ENCODE measurements at regions of chr4 and their contacts with region 1.

Region 1: GRCh38 chr4:119559044-119559647 is 69.5 kb downstream of the PDE5A start:
- DNase-seq: peak; percentile 23 to 62 (median 52)
- H3K4me3 ChIP-seq: no peak overlapping the region
- H3K27ac ChIP-seq: no peak overlapping the region
- H3K4me1 ChIP-seq: no peaks in the 10 kb centered on the region
- H3K27me3 ChIP-seq: no peaks in the 10 kb centered on the region

Region 2: DNA sequence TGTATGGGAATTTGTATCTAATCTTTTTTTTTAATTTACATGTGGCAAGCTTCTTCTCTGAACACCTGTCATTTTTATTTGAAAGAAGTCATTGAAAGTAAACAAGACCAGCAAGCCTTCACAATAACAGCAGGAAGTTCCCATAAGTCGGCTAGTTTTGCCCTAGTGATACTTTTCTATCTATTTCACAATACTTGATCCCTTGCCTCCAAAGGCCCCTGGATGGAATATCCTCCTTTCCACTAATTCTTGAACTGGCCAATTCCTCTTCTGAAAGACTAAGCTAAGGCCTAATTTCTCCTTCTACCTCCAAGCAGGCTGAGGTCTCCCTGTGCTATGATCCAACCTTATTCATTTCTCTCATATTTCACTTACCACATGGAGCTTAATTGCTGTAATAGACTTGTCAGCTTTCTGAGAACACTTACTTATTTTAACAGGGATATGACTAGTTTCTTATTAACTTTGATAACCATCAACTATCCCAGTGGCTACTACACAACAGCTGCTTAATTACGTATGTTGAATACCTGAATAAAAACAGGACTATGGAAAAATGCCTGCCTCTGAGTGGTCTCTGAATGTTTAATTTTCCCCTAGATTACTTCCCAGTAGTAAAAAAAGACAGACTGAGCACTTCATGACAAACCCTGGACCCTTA is 313.4 kb after region 1 on chr4:
- CTCF ChIA-PET with region 1: no interaction called
- POLR2A ChIA-PET with region 1: no interaction called
- DNase-seq: no peak
- H3K4me3 ChIP-seq: no peak overlapping the region
- H3K27ac ChIP-seq: no peak overlapping the region
- H3K4me1 ChIP-seq: no peaks in the 10 kb centered on the region
- H3K27me3 ChIP-seq: no peaks in the 10 kb centered on the region

Region 3: GRCh38 chr4:120056246-120056645 is 497.1 kb after region 1 on chr4:
- CTCF ChIA-PET with region 1: interaction called, 15 read pairs
- POLR2A ChIA-PET with region 1: no interaction called
- DNase-seq: peak; percentile 21 to 44 (median 35)
- H3K4me3 ChIP-seq: no peak overlapping the region
- H3K27ac ChIP-seq: no peak overlapping the region
- H3K4me1 ChIP-seq: peaks cover 0 to 3% (median 0%) of the 10 kb centered on the region in 4 experiments
- H3K27me3 ChIP-seq: no peaks in the 10 kb centered on the region